Head of caudate nucleus (tissue), 42 donors: ENCODE measurements at regions of chr14 and their contacts with region 1.

Region 1: DNA sequence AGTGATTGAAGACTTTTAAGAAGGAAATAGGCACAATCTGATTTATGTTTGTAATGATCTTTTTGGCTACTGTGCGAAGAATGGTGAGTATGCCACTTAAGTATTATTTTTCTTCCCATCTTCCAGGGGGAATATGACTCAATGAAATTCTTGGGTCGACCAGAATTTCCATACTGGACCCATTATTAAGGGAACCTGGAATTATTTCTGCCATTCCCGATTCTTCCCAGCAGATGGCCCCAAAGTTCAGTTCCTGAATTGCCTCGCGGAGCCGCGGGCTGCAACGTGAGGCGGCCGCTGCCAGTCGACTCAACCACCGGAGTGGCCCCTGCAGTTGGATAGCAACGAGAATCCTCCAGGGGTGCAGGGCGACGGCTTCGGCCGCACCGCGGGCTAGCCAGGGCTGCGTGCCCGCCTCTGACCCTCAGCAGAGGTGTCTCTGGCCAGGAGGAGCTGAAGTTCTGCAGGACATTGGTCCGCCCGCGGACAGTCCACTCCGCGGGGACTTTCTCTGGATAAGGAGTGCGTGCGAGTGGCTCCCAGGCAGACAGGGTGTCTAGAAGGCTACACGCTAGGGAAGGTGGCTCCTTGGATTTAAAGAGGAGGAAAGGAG is 628 bp upstream of the TSHR start:
- DNase-seq: peak; percentile 68 to 95 (median 85)

Region 2: DNA sequence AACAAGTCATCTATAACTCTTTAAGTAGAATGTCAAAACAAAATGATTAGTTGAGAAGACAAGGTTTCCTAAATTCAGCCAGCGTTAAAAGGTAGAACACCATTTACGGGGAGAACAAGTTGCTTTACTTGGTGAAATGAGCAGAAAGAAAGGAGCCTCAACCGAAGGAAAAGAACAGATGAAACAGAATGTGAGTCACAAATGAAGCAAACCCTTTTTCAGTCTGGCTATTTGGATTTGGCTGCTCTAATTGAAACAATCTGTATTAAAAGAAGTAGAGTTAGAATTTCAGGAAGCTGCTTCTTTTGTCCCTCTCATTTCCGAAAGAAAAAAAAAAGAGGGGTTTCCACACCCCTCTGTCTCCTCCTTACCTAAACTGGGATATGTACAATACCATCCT is 47.8 kb before region 1 on chr14:
- intact Hi-C with region 1: no loop called
- DNase-seq: no peak

Region 3: DNA sequence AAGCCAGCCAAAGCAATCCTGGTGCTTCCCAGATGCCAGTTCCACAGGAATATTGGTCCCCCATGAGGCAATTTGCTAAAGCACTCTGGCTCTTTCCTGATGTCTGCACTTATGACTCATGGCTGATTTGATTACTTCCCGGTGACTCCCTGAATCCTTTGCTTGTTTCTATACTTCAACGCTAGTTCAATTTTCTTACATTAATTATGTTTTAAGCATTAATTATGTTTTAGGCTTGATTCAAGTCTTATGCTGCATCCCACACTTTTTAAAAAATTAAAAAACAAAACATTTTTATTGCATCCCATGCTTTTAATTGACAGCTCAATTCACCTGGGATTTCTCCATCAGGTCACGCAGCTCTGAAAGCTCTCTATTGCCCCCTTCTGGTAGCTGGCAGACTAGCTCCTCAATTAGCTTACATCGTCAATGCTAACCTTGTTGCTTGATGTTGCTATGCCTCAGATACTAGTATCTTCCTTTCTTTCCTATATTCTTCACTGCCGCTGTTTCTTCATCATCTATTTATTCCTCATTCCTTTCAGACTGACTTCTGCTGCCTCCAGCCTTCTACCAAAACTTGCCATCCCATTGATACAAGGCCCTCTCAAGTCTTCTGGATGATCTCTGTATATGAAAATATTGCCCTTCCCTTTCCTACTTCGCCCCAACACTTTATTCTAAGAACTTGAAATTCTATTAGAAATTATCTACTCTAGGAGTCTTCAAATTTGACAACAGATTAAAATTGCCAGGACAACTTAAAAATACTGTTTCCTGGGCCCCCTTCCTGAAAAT is 32.6 kb after region 1 on chr14:
- intact Hi-C with region 1: loop called (anchors 2 kb)
- DNase-seq: peak; percentile 6 to 91 (median 76)